ENCODE measurements at regions of chr18 and their contacts with region 1.

Region 1: GRCh38 chr18:32714571-32715148 is 58.2 kb downstream of the KLHL14 start:
- DNase-seq: peak in 5 of 9 donors; percentile 5 to 18 (median 8)
- ATAC-seq: peak; percentile 56
- H3K4me3 ChIP-seq: no peak overlapping the region
- H3K4me3 Mint-ChIP-seq: no peak overlapping the region
- H3K27ac ChIP-seq: no peak overlapping the region
- H3K27ac Mint-ChIP-seq: no peak overlapping the region
- H3K4me1 ChIP-seq: no peaks in the 10 kb centered on the region
- H3K4me1 Mint-ChIP-seq: no peaks in the 10 kb centered on the region
- H3K27me3 ChIP-seq: no peaks in the 10 kb centered on the region
- H3K27me3 Mint-ChIP-seq: peaks cover 0 to 9% (median 0%) of the 10 kb centered on the region in 5 donors

Region 2: DNA sequence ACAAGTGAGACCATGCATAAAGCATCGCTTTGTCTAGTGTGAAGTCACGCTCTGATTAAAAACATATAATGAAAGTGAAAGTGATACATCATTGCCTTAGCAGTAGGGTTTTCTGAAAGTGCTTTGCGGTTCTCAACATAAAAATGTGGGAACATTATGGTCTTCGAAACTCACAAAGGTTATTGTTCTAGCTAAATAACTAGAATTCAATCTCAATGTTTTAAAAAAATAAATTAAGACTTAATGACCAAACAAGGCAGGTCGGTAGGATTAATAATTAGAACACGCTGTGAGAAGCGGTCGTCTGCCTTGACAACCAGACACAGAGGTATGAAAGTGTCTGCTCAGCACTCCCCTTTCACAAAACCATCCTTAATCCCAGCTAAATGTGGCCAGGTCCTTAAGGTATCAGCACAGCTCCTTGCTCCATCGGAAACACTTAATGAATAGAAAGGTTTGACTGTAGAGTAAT is 16.0 kb after region 1 on chr18:
- CTCF ChIA-PET with region 1: interaction called, 3 read pairs
- POLR2A ChIA-PET with region 1: no interaction called
- intact Hi-C with region 1: loop called in 1 of 2 experiments (anchors 1 kb)
- DNase-seq: peak in 1 of 9 donors; percentile 15
- ATAC-seq: no peak
- H3K4me3 ChIP-seq: peak overlapping the region; percentile 11
- H3K4me3 Mint-ChIP-seq: peak overlapping the region in 9 of 10 donors; percentile 33 to 83 (median 81)
- H3K27ac ChIP-seq: no peak overlapping the region
- H3K27ac Mint-ChIP-seq: peak overlapping the region in 7 of 9 donors; percentile 18 to 74 (median 49)
- H3K4me1 ChIP-seq: no peaks in the 10 kb centered on the region
- H3K4me1 Mint-ChIP-seq: peaks cover 0 to 6% (median 6%) of the 10 kb centered on the region in 7 donors
- H3K27me3 ChIP-seq: no peaks in the 10 kb centered on the region
- H3K27me3 Mint-ChIP-seq: peaks cover 0 to 4% (median 2%) of the 10 kb centered on the region in 5 donors

Region 3: DNA sequence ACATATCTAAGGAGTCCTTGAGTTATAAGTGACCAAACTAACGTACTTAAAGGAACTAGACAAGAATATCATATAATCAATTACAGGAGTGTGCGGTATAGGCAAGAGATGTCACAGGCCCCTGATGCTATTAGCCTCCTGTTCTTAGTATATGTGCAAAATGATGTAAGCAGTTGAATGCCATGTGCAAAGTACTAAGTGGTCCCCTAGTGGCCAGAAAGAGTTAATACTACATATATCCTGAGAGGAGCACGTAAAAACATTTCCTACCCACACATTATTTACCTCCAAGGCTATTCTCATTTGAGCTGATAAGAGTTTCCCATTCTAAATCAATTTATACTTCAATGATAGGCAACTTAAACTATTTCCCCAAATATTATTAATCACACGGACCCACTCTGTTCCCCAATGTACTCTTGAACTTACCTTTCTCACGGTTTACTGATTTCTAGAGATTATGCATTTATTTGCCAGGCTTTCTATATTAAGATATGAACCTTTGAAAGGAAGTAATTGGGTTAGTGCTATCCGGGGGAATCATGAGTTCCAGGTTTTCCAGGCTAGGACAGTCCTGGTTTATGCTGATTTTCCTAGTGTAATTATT is 216.1 kb after region 1 on chr18:
- CTCF ChIA-PET with region 1: no interaction called
- POLR2A ChIA-PET with region 1: no interaction called
- intact Hi-C with region 1: loop called in 1 of 2 experiments (anchors 1 kb)
- DNase-seq: no peak
- ATAC-seq: peak; percentile 37
- H3K4me3 ChIP-seq: no peak overlapping the region
- H3K4me3 Mint-ChIP-seq: no peak overlapping the region
- H3K27ac ChIP-seq: no peak overlapping the region
- H3K27ac Mint-ChIP-seq: no peak overlapping the region
- H3K4me1 ChIP-seq: no peaks in the 10 kb centered on the region
- H3K4me1 Mint-ChIP-seq: no peaks in the 10 kb centered on the region
- H3K27me3 ChIP-seq: no peaks in the 10 kb centered on the region
- H3K27me3 Mint-ChIP-seq: peaks cover 0 to 5% (median 0%) of the 10 kb centered on the region in 5 donors

Measured in naive thymus-derived CD4-positive, alpha-beta T cell (primary cell).